Activated naive CD4-positive, alpha-beta T cell treated with anti-CD3 and anti-CD28 coated beads, Interleukin-2, amount 10 ng/mL, durations not matched to agents 7 days and 5 days (primary cell): ENCODE measurements at regions of chr1 and their contacts with region 1.

Region 1: GRCh38 chr1:175129182-175129581 is 61.5 kb downstream of the TNN start:
- DNase-seq: no peak
- H3K4me3 Mint-ChIP-seq: no peak overlapping the region
- H3K27ac Mint-ChIP-seq: no peak overlapping the region
- H3K4me1 Mint-ChIP-seq: no peaks in the 10 kb centered on the region
- H3K27me3 Mint-ChIP-seq: peaks cover 26% of the 10 kb centered on the region

Region 2: DNA sequence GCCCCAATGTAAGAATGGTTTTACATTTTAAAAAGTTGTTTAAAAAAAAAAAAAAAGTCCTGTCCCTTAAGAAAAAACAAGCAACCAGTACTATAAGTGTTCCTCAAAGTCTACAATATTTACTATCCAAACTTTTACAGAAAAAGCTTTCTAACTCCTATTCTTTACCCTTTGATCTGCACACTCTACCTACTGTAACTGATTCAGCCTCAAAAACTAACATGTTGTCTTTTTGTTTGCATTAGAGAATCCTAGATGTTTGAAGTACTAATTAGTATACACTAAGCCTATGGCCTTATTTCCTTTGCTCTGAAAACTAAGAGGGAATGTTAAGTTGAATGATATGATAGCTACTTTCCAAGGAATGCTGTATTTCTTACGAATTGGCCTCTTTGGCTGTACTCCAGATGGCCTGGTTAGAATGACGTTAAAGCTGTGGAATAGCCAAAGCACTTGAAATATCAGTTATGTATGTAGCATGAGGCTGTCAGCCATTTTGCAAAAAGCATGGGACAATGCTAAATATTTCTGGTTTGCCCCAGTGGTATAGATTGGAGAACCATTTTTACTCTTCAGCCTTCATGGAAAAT is 446.7 kb before region 1 on chr1:
- CTCF ChIA-PET with region 1: no interaction called
- DNase-seq: no peak
- H3K4me3 Mint-ChIP-seq: no peak overlapping the region
- H3K27ac Mint-ChIP-seq: no peak overlapping the region
- H3K4me1 Mint-ChIP-seq: no peaks in the 10 kb centered on the region
- H3K27me3 Mint-ChIP-seq: no peaks in the 10 kb centered on the region

Region 3: GRCh38 chr1:175023043-175023921 is 105.9 kb before region 1 on chr1 and contains the start of gene MRPS14:
- CTCF ChIA-PET with region 1: interaction called, 138 read pairs
- DNase-seq: peak; percentile 99
- H3K4me3 Mint-ChIP-seq: peak within 1 kb of the TSS; percentile 83
- H3K27ac Mint-ChIP-seq: peak within 1 kb of the TSS; percentile 87
- H3K4me1 Mint-ChIP-seq: peaks cover 33% of the 10 kb centered on the region
- H3K27me3 Mint-ChIP-seq: no peaks in the 10 kb centered on the region

Region 4: GRCh38 chr1:175116210-175116798 is 12.9 kb before region 1 on chr1:
- CTCF ChIA-PET with region 1: interaction called, 20 read pairs
- DNase-seq: no peak
- H3K4me3 Mint-ChIP-seq: no peak overlapping the region
- H3K27ac Mint-ChIP-seq: no peak overlapping the region
- H3K4me1 Mint-ChIP-seq: no peaks in the 10 kb centered on the region
- H3K27me3 Mint-ChIP-seq: peaks cover 20% of the 10 kb centered on the region